Right ventricle myocardium inferior (tissue), 1 donor: ENCODE measurements at regions of chr7 and their contacts with region 1.

Region 1: DNA sequence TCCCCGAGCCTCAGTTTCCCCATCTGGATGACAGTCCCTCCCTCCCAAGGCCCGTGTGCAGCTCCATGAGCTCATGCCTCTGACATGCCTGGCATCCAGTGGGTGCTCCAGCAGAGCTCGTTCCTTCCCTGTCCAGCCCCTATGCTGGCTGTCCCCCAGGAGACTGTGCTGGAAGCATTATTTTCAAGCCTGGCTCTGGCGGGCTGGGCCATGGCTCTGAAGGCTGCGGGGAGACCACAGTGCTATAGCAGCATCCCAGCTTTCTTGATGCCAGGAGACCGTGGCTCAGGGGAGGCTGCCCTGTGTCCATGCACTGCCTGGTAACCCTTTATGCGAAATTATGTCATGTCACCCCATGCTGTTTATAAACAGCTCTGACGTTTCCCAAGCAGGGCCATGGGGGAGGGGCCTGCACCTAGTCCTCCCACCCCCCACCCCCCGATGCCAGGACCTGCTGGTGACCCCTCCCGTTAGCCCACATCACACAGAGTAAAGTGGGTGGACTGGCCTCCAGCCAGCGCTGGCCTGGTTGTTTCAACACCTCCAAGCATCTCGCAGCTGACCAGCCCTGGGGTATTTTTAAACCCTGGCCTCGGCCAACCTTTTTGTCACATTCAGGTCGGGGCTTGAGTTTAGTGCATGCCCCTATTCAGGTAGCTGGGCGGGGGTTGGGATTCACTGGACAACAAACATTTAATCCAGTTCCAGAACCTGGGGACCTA is 105.9 kb upstream of the ZNF716 start:
- DNase-seq: peak; percentile 83
- ATAC-seq: peak; percentile 71

Region 2: DNA sequence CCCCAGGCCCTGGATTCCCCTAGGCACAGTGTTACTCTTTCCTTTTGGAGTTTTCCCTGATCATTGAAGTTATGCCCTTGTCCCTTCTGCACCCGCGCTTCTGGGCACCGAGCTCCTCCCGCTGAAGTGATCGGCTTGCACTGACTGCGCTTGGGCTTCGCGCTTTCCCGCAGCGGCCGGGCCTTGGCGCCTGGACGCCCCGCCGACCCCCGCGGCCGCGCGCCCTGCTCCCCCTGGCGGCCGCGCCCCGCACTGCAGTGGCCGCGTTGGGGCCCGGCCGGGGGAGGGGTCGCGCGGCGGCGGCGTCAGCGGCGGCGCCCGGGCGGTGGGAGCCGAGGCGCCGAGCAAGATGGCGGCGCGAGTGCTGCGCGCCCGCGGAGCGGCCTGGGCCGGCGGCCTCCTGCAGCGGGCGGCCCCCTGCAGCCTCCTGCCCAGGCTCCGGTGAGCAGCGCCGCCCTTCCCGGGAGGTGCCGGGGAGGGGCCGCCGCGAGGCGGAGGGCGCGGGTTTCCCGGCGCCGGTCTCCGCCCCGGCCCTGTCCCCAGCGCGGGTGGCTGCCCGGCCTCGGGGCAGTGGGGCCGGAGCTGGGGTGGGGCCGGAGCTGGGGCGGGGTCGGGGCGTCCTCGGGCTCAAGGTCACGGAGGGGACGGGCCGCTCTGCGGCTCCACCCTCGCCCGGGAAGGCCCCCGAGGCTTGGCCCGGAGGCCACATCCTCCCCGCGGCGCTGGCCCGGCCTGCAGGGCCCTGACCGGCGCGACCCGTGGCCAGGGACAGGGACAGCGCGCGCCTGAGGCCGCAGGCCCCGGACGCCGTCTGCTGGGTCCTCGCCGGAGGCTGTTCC is 1379.6 kb before region 1 on chr7 and contains the start of gene NIPSNAP2:
- intact Hi-C with region 1: loop called (anchors 10 kb)
- DNase-seq: peak; percentile 92
- ATAC-seq: peak; percentile 96
- total RNA-seq, gene NIPSNAP2: 348 TPM

Region 3: GRCh38 chr7:57256637-57257375 is 87.3 kb before region 1 on chr7:
- intact Hi-C with region 1: no loop called
- DNase-seq: no peak
- ATAC-seq: no peak